SK-N-SH (cell line): ENCODE measurements at regions of chr20 and their contacts with region 1.

Region 1: DNA sequence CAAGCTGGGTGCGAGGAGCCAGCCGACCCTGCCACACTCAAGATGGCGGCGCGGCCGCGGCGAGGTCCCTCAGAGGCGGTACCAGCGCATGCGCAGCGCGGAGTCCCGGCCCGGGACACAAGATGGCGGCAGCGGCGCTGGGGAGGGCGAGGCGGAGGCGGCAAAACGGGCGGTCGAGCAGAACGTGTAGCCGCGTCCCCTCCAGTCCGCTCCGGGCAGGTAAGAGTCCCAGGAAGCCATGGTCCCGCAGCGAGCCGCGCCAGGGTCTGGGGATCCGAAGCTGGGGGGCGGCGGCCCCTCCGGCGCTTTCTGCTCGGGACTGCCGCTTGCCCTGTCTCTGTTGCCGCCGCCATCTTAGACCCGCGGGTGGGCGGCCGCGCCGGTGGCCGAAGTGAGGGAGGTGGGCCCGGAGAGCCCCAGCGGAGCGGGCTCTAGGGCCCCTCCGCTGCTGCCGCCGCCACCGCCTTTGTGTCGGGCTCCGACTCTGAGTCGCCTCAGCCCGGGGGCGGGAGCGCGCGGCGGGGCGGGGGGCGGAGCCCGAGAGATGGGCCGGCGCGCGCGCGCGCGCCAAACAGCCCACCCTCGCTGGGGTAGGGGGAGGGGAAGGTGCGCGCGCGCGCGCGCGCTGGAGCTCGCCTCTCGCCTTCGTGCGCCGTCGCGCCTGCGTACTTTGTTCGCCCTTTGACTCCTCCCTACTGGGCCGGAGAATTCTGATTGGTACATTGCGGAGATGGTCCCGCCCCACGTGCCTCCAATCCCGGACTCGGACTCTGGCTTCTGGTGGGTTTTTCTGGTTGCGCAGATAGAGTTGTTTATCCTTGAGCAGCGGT is at the start of gene PCIF1:
- DNase-seq: peak; percentile 98
- H3K4me3 ChIP-seq: peak within 1 kb of the TSS; percentile 85 to 89
- H3K27ac ChIP-seq: peak within 1 kb of the TSS; percentile 98
- H3K4me1 ChIP-seq: peaks cover 10 to 26% of the 10 kb centered on the region in 2 experiments; a peak in 3 of 4 replicates
- H3K27me3 ChIP-seq: no peaks in the 10 kb centered on the region
- CTCF ChIP-seq: no peak
- EP300 ChIP-seq: no peak
- RAD21 ChIP-seq: no peak
- polyA plus RNA-seq, gene PCIF1: 18.2 and 23.1 TPM in 2 replicates

Region 2: GRCh38 chr20:45910670-45911485 is 23.9 kb before region 1 on chr20:
- CTCF ChIA-PET with region 1: interaction called, 3 read pairs
- POLR2A ChIA-PET with region 1: interaction called, 46 read pairs
- DNase-seq: peak; percentile 96
- H3K4me3 ChIP-seq: peak overlapping the region; percentile 60 to 72
- H3K27ac ChIP-seq: peak overlapping the region; percentile 81 to 91
- H3K4me1 ChIP-seq: peaks cover 7 to 8% of the 10 kb centered on the region in 2 experiments; a peak in 1 of 4 replicates
- H3K27me3 ChIP-seq: no peaks in the 10 kb centered on the region
- CTCF ChIP-seq: no peak
- EP300 ChIP-seq: no peak
- RAD21 ChIP-seq: no peak

Region 3: DNA sequence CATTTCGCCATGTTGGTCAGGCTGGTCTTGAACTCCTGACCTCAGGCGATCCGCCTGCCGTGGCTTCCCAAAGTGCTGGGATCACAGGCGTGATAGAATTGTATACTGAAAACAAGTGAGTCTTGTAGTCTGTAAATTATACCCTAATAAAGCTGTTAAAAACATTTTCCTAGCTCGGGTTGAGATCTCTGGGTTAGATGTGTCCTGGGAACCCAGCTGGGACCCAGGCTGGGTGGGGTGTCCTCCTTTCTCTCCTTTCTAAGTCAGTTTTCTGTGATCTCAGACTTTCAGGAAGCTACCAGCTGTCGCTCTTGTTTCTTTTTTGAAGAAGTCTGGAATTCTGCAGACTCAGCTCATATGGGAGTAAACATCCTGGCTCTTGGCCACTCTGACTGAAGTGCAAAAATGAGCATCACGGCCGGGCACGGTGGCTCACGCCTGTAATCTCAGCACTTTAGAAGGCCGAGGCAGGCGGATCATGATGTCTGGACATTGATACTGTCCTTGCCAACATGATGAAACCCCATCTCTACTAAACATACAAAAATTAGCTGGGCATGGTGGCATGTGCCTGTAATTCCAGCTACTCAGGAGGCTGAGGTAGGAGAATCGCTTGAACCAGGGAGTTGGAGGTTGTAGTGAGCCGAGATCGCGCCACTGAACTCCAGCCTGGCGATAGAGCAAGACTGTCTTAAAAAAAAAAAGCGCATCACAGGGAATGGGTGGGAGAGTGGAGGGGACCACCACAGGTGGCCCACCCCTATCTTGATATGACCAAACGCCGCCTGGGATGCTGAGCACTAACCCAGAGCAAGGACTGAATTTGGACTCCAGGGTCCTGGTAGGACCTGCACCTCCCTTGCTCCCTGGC is 10.2 kb before region 1 on chr20:
- CTCF ChIA-PET with region 1: interaction called, 5 read pairs
- POLR2A ChIA-PET with region 1: interaction called, 34 read pairs
- DNase-seq: no peak
- H3K4me3 ChIP-seq: no peak overlapping the region
- H3K27ac ChIP-seq: no peak overlapping the region
- H3K4me1 ChIP-seq: peaks cover 0 to 8% of the 10 kb centered on the region in 2 experiments; a peak in 1 of 4 replicates
- H3K27me3 ChIP-seq: no peaks in the 10 kb centered on the region
- CTCF ChIP-seq: no peak
- EP300 ChIP-seq: no peak
- RAD21 ChIP-seq: no peak

Region 4: DNA sequence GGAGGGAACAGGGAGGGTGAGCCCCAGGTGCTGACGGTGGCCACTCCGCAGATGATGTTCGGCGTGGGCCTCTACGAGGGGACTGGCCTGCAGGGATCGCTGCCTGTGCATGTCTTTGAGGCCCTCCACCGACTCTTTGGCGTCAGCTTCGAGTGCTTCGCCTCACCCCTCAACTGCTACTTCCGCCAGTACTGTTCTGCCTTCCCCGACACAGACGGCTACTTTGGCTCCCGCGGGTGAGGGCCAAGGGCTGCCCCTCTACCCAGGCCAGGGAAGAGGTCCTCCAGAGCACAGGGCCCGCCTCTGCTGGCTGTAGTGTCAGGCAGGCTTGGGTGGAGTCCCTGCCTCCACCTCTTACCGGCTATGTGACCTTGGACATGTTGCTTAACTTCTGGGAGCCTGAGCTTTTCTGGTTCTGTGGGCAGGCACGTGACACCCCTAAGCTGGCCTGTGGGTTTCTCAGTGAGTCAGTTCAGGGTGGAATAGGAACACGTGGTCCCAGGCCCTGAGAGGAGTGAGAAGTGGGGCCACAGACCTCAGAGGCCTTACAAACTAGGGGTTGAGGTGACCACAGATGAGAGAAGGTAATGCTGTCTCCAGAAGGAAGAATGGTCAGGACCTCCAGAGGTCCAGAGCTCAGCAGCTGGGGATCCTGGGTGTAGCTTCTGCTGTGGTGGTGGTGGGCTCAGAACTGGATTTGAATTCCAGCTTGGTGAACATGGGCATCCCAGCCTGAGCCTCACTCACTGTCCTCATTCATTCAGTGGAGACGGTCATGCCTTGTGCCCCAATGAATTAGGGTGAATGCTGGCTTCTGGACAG is 11.6 kb after region 1 on chr20:
- CTCF ChIA-PET with region 1: interaction called, 7 read pairs
- POLR2A ChIA-PET with region 1: interaction called, 41 read pairs
- DNase-seq: no peak
- H3K4me3 ChIP-seq: no peak overlapping the region
- H3K27ac ChIP-seq: no peak overlapping the region
- H3K4me1 ChIP-seq: peaks cover 0 to 5% of the 10 kb centered on the region in 2 experiments; a peak in 1 of 4 replicates
- H3K27me3 ChIP-seq: no peaks in the 10 kb centered on the region
- CTCF ChIP-seq: no peak
- EP300 ChIP-seq: no peak
- RAD21 ChIP-seq: no peak

Region 5: GRCh38 chr20:46132705-46133120 is 197.9 kb after region 1 on chr20:
- CTCF ChIA-PET with region 1: no interaction called
- POLR2A ChIA-PET with region 1: no interaction called
- DNase-seq: peak; percentile 88
- H3K4me3 ChIP-seq: peak overlapping the region in 1 of 2 experiments; percentile 33; a peak in 1 of 4 replicates
- H3K27ac ChIP-seq: no peak overlapping the region
- H3K4me1 ChIP-seq: peaks cover 0 to 35% of the 10 kb centered on the region in 2 experiments; a peak in 1 of 4 replicates
- H3K27me3 ChIP-seq: peaks cover 30% of the 10 kb centered on the region; the same call in 1 of the 2 replicates
- CTCF ChIP-seq: peak; percentile 90
- EP300 ChIP-seq: no peak
- RAD21 ChIP-seq: peak; percentile 94